Calu3 (cell line): ENCODE measurements at regions of chr4 and their contacts with region 1.

Region 1: GRCh38 chr4:93791570-93792195 is 36.9 kb upstream of the ATOH1 start:
- DNase-seq: peak; percentile 46
- H3K4me3 Mint-ChIP-seq: no peak overlapping the region
- H3K27ac Mint-ChIP-seq: no peak overlapping the region
- H3K4me1 Mint-ChIP-seq: no peaks in the 10 kb centered on the region
- H3K27me3 Mint-ChIP-seq: no peaks in the 10 kb centered on the region
- CTCF ChIP-seq: peak; percentile 60

Region 2: DNA sequence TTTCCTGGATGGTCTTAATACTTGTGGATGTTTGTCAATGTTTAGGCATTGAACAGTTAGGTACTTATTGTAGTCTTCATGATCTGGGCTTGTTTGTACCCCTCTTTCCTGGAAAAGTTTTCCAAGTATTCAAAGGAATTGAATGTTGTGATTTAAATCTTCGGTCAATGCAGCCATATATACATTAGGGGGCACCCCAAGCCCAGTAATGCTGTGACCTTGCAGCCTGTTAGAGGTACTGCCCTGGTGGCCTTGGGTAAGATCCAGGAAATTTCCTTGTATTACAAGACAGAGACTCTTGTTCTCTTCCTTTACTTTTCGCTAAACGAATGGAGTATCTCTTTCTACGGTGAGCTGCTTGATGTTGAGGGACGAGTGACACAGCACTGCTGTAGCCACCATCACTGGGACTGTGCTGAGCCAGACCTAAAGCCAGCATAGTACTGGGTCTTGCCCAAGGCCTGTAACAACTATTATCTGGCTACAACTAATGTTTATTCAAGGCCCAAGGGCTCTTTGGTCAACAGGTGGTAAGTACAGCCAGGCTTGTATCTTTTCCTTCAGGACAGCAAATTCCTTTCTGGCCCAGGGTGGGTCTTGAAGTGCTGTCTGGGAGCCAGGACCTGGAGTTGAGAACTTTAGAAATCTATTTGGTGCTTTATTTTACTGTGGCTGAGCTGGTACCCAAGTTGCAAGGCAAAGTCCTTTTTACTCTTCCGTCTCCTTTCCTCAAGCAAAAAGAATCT is 81.4 kb before region 1 on chr4:
- CTCF ChIA-PET with region 1: no interaction called
- intact Hi-C with region 1: loop called (anchors 2 kb)
- DNase-seq: peak; percentile 6
- H3K4me3 Mint-ChIP-seq: no peak overlapping the region
- H3K27ac Mint-ChIP-seq: no peak overlapping the region
- H3K4me1 Mint-ChIP-seq: no peaks in the 10 kb centered on the region
- H3K27me3 Mint-ChIP-seq: no peaks in the 10 kb centered on the region
- CTCF ChIP-seq: no peak

Region 3: GRCh38 chr4:93722446-93722845 is 69.2 kb before region 1 on chr4:
- CTCF ChIA-PET with region 1: no interaction called
- intact Hi-C with region 1: no loop called
- DNase-seq: no peak
- H3K4me3 Mint-ChIP-seq: no peak overlapping the region
- H3K27ac Mint-ChIP-seq: no peak overlapping the region
- H3K4me1 Mint-ChIP-seq: no peaks in the 10 kb centered on the region
- H3K27me3 Mint-ChIP-seq: no peaks in the 10 kb centered on the region
- CTCF ChIP-seq: no peak

Region 4: GRCh38 chr4:94127707-94128328 is 336.1 kb after region 1 on chr4:
- CTCF ChIA-PET with region 1: no interaction called
- intact Hi-C with region 1: loop called (anchors 1 kb)
- DNase-seq: peak; percentile 21
- H3K4me3 Mint-ChIP-seq: no peak overlapping the region
- H3K27ac Mint-ChIP-seq: no peak overlapping the region
- H3K4me1 Mint-ChIP-seq: no peaks in the 10 kb centered on the region
- H3K27me3 Mint-ChIP-seq: no peaks in the 10 kb centered on the region
- CTCF ChIP-seq: peak; percentile 44

Region 5: DNA sequence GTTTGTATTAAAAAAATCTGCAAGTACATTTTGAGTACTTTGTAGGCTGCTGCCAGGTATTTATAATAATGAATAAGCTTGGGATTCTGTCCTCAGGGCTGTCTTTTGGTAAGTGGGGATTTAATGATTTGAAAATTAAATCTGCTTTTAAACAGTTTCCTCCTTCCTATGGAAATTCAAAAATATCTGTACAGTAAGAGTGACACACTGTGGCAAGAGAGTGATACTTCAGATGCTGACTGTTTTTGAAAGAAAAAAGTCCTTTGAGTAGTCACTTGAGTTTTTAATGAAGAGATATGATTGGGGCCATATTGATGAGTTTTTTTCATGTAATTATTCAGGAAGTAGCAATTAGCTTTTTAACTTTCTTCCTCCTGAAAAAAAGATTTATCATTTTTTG is 465.1 kb after region 1 on chr4:
- CTCF ChIA-PET with region 1: no interaction called
- intact Hi-C with region 1: loop called (anchors 5 kb)
- DNase-seq: no peak
- H3K4me3 Mint-ChIP-seq: no peak overlapping the region
- H3K27ac Mint-ChIP-seq: no peak overlapping the region
- H3K4me1 Mint-ChIP-seq: no peaks in the 10 kb centered on the region
- H3K27me3 Mint-ChIP-seq: no peaks in the 10 kb centered on the region
- CTCF ChIP-seq: no peak

Region 6: DNA sequence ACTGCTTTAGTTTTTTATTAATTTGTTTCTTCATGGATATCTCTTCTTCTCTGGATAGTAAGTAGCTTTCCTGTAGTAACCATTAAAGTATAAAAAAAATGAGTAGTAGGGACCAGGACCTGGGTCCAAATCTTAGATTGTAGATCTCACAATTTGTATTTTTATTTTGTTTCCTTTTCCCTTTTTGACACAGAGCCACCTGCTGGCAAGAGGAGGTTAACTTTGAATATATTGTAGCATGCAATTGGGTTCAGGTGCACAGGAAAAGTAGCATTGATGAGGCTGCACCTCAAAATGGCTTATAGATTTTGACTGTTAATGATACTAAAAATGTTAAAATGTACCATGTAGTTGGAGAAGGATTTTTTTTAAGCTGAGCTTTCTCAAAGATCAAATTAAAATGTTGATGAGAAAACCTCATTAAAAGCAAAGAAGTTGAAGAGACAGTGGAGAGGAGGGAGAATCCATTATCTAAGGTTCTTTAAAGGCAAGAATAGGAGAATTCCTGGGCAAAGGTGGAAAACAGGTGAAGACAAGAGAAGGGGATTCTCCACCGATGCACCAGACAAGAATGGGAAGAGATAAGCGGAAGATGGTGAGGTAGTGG is 599.2 kb after region 1 on chr4:
- CTCF ChIA-PET with region 1: no interaction called
- intact Hi-C with region 1: loop called (anchors 2 kb)
- DNase-seq: peak; percentile 22
- H3K4me3 Mint-ChIP-seq: no peak overlapping the region
- H3K27ac Mint-ChIP-seq: no peak overlapping the region
- H3K4me1 Mint-ChIP-seq: no peaks in the 10 kb centered on the region
- H3K27me3 Mint-ChIP-seq: peaks cover 24% of the 10 kb centered on the region
- CTCF ChIP-seq: peak; percentile 29